ENCODE measurements at regions of chr3 and their contacts with region 1.

Region 1: DNA sequence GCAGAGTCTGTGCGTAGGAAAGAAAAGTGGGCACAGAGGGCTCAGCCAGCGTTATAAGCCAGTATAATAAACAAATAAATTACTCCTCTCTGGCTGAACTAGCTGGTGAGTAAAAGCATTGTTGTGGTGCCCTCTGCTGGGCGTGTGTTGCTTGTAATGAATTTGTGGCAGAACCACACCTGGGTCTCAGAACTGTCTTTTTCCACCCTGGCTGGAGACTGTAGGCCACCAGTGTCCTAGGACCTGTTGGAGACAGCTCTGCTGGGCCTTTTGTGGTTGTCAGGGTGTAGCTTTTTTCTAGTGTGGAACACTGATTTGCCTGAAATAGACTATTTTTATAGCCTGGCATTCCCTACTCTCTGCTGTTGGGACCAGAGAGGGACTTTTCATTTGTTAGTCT is 130.5 kb upstream of the EIF1B start:
- DNase-seq: no peak

Region 2: DNA sequence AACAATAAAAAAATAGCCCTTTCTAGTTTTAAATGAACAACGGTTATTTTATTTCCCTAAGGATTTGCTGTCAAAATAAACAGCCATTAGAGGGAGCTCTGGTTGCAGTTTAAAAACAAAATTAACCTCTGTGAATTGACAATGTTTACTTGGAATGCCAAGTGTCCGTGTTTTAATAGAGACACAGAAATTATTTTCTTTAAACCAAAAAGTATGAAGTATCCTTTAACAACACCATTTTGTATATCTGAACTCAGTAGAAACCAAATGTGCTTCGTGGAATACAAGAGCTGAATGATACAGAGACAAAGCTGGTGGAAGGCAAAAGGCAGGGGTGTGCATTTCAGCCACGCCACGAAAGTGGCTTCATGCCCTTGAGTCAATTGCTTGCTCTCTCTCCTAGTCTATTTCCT is 637.1 kb before region 1 on chr3:
- intact Hi-C with region 1: loop called (anchors 5 kb)
- DNase-seq: no peak

Region 3: DNA sequence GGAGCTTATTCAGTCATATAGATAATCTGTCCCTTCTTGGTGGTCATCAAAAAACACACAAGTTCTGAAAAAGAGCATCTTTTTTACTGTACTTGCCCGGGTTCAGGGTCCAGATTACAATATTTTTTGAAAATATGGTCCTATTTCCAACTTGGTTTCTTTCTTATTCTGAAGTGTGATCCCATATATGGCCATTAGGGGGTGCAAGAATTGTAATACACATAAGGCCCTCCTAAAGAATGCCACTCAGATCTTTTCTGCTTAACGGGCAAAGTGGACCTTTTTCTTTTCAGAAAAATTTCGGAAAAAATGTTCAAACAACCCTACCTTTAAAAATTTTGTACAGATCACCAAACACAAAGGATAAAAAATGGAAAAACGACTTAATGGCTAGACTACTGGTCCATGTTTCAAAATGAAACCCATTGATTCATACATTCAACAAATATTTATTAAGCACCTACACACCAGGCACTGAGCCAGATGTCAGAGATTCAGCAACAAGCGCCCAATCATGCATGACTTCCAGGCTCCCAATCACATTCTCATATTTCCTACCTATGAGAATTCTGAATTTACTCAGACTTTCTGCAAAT is 471.6 kb before region 1 on chr3:
- intact Hi-C with region 1: loop called (anchors 5 kb)
- DNase-seq: no peak

Region 4: GRCh38 chr3:39724233-39724846 is 454.7 kb before region 1 on chr3:
- intact Hi-C with region 1: loop called (anchors 5 kb)
- DNase-seq: no peak

Measured in cardiac septum (tissue), 1 donor.